OCI-LY7 (cell line): ENCODE measurements at regions of chr5 and their contacts with region 1.

Region 1: DNA sequence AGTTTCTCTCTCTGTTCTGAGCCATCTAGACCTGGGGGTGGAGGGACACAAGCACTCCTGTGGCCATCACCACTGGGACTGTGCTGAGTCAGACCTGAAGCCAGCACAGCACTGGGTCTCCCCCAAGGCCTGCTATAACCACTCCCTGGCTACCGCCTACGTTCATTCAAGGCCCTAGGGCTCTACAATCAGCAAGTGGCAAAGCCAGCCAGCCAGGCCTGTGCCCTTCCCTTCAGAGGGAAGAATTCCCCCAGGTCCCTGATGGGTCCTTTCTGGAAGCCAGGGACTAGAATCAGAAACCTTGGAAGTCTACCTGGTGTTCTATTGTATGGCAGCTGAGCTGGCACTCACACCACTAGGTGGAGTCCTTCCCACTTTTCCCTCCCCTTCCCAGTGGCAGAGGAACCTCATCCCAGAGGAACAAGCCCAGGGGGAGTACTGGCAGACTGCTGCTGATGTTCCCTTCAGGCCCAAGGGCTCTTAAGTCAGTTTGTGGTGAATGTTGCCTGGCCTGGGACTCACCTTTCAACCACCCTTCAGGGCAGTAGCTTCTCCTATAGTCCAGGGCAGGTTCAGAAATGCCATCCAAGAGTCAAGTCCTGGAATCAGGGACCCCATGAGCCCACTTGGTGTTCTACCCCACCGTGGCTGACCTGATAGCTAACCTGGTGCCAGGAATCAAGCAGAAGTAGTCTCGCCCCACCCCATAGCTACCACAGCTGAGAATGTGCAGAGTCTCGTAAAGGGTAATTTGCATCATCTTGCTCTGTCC is 20.0 kb downstream of the JMY start:
- DNase-seq: no peak
- H3K4me3 ChIP-seq: peak overlapping the region; percentile 0
- H3K27ac ChIP-seq: peak overlapping the region; percentile 40
- H3K4me1 ChIP-seq: peaks cover 36% of the 10 kb centered on the region
- CTCF ChIP-seq: peak; percentile 87

Region 2: DNA sequence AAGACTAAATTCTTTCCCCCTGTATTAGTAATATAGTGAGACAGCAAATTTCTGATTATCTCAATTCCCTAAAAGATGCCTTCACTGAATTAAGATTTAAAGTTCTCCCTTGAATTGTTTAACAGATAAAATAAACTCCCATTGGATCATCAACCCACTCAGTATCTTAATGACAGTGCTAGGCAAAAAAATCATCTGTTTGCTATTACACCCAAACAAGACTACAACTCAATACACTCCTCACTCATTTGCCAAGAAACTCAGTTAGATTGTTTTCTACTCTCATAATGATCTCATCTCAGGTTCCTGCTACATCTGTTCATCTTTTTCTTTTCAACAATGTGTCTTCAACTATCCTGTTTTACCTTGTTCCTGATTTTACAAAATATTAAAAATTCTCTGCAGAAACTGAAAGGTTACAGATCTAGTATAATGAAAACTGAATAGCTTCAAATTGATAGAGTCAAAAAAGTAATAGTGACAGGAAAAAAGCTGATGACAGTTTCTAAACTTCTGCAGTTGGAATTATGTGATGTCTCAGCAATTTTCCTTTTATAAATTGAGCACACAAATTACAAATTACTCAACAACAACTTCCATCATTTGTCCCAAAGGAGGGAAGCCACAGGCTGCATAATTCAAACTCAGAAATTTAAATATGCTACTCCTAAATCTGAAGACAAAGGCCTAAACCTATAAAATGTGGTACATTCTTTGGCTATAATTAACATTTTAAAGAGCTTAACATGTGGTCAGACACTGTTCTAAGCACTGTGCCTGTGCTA is 218.6 kb after region 1 on chr5:
- CTCF ChIA-PET with region 1: interaction called, 11 read pairs
- POLR2A ChIA-PET with region 1: interaction called, 3 read pairs
- intact Hi-C with region 1: no loop called
- DNase-seq: no peak
- H3K4me3 ChIP-seq: no peak overlapping the region
- H3K27ac ChIP-seq: no peak overlapping the region
- H3K4me1 ChIP-seq: no peaks in the 10 kb centered on the region
- CTCF ChIP-seq: no peak